ENCODE measurements at regions of chr9 and their contacts with region 1.

Region 1: GRCh38 chr9:133375724-133376654 is at the starts of genes STKLD1 and SURF4:
- DNase-seq: peak; percentile 96
- H3K4me3 Mint-ChIP-seq: peak within 1 kb of the TSS; percentile 99
- H3K27ac Mint-ChIP-seq: peak within 1 kb of the TSS; percentile 99
- H3K4me1 Mint-ChIP-seq: peaks cover 28% of the 10 kb centered on the region
- H3K27me3 Mint-ChIP-seq: no peaks in the 10 kb centered on the region
- total RNA-seq, gene STKLD1: 0.64 and 1.5 TPM in 2 replicates
- total RNA-seq, gene SURF4: 236 and 242 TPM in 2 replicates

Region 2: DNA sequence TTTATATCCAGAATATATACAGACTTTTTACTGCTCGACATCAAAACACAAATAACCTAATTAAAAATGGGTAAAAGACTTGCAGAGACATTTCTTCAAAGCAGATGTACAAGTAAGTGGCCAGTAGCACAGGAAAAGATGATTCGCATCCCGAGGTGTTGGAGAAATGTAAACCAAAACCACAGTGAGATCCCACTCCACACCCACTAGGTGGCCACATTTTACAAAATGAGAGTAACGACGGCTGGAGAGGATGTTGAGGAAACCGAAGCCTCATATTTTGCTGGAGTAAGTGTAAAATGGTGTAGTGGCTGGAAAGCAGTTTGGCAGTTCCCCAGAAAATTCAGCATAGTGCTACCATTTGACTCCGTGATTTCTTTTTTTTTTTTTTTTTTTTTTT is 191.0 kb before region 1 on chr9:
- intact Hi-C with region 1: loop called (anchors 2 kb)
- DNase-seq: peak; percentile 51
- H3K4me3 Mint-ChIP-seq: no peak overlapping the region
- H3K27ac Mint-ChIP-seq: peak overlapping the region; percentile 42
- H3K4me1 Mint-ChIP-seq: peaks cover 27% of the 10 kb centered on the region
- H3K27me3 Mint-ChIP-seq: peaks cover 40% of the 10 kb centered on the region

Region 3: GRCh38 chr9:133347985-133348717 is 27.8 kb before region 1 on chr9 and contains the starts of genes MED22 and RPL7A:
- intact Hi-C with region 1: loop called (anchors 1 kb)
- DNase-seq: peak; percentile 90
- H3K4me3 Mint-ChIP-seq: peak within 1 kb of the TSS; percentile 93
- H3K27ac Mint-ChIP-seq: peak within 1 kb of the TSS; percentile 99
- H3K4me1 Mint-ChIP-seq: peaks cover 36% of the 10 kb centered on the region
- H3K27me3 Mint-ChIP-seq: peaks cover 2% of the 10 kb centered on the region
- total RNA-seq, gene MED22: 37.9 and 40.5 TPM in 2 replicates
- total RNA-seq, gene RPL7A: 2,401 and 2,463 TPM in 2 replicates

Region 4: GRCh38 chr9:133406480-133407307 is 30.7 kb after region 1 on chr9:
- intact Hi-C with region 1: loop called (anchors 2 kb)
- DNase-seq: peak; percentile 67
- H3K4me3 Mint-ChIP-seq: no peak overlapping the region
- H3K27ac Mint-ChIP-seq: peak overlapping the region; percentile 82
- H3K4me1 Mint-ChIP-seq: peaks cover 9% of the 10 kb centered on the region
- H3K27me3 Mint-ChIP-seq: no peaks in the 10 kb centered on the region

Region 5: GRCh38 chr9:133459476-133460404 is 83.8 kb after region 1 on chr9 and contains the start of gene CACFD1:
- intact Hi-C with region 1: loop called (anchors 1 kb)
- DNase-seq: peak; percentile 80
- H3K4me3 Mint-ChIP-seq: peak within 1 kb of the TSS; percentile 86
- H3K27ac Mint-ChIP-seq: peak within 1 kb of the TSS; percentile 77
- H3K4me1 Mint-ChIP-seq: no peaks in the 10 kb centered on the region
- H3K27me3 Mint-ChIP-seq: peaks cover 11% of the 10 kb centered on the region
- total RNA-seq, gene CACFD1: 1.0 and 1.1 TPM in 2 replicates

Region 6: DNA sequence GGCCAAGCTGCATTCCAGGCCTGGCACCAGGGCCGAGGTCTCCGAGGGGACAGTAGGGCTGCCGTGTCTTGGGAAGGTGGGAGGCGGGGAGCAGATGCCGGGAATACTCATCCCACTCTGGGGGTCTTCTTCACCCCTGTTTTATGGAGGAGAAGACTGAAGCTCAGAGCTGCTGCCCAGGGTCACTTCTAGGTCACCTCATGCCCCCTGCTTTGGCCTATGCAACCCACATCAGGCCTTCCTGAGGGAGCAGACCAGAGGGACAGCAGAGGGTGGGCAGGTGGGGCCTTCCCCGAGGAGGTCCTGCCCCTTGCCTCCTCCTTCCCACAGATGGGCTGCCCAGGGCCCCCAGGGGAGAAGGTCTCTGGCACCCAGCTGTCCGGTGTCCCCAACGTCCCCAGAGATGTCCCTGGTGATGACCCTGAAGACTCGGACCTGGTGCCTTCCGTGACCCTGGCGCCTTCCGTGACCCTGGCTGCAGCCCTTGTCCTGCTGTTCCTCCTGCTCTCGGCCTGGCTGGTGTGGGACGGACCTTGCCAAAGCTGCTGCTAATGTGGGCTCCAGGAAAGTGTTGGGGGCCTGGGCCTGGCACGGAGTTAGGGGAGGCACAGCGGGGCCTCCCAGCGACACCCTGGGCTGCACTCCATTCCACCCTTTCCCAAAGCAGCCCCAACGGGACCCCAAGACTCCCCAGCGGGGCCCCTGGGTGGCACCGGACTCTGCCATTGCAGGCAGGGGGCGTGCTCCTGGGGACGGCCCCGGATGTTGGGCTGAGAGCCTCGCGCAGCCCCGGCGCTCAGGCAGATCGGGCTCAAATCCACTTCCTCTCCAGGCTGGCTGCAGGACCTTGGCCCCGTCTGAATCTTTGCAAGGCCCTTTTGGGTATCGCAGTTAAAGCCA is 109.6 kb after region 1 on chr9:
- intact Hi-C with region 1: loop called (anchors 2 kb)
- DNase-seq: no peak
- H3K4me3 Mint-ChIP-seq: no peak overlapping the region
- H3K27ac Mint-ChIP-seq: no peak overlapping the region
- H3K4me1 Mint-ChIP-seq: peaks cover 6% of the 10 kb centered on the region
- H3K27me3 Mint-ChIP-seq: peaks cover 11% of the 10 kb centered on the region

Region 7: GRCh38 chr9:133532937-133533668 is 157.1 kb after region 1 on chr9:
- intact Hi-C with region 1: no loop called
- DNase-seq: peak; percentile 24
- H3K4me3 Mint-ChIP-seq: no peak overlapping the region
- H3K27ac Mint-ChIP-seq: no peak overlapping the region
- H3K4me1 Mint-ChIP-seq: no peaks in the 10 kb centered on the region
- H3K27me3 Mint-ChIP-seq: peaks cover 11% of the 10 kb centered on the region

Region 8: DNA sequence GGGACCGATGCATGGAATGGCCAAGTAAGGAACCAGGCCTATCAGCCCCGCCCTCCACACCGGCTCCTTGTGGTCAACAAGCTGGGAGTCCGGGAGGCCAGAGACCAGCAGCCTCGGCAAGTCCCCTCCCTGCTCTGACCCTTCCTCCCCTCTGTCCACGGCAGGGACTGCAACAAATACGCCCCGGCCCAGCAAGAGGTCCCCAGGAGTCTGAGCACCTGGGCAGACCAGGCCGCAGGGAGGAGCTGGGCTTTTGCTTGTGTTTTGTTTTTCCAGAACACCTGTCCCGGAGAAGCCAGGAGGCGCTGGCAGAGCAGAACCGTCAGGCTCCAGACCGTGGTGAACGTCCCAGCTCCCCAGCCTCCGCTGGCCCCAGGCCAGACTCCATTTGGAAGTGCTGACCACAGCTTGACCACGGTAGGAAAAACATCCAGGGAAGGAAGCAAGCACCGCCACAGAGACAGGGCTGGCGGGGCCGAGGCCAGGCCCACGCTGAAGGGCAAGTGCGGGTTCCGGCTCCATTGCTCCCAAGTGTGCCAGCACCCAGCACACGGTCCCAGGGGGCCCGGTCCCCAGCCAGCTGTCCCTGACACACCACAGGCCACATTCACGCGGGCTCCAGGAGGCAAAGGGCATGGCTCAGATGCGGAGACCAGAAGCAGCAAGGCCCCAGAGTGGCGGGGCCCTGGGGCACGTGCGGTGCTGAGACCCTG is 559.5 kb after region 1 on chr9:
- intact Hi-C with region 1: no loop called
- DNase-seq: no peak
- H3K4me3 Mint-ChIP-seq: no peak overlapping the region
- H3K27ac Mint-ChIP-seq: no peak overlapping the region
- H3K4me1 Mint-ChIP-seq: no peaks in the 10 kb centered on the region
- H3K27me3 Mint-ChIP-seq: no peaks in the 10 kb centered on the region